Heart left ventricle (tissue), 16 donors: ENCODE measurements at regions of chr1 and their contacts with region 1.

Region 1: GRCh38 chr1:180540697-180541594 is 17.8 kb upstream of the OVAAL start:
- DNase-seq: peak in 3 of 5 donors; percentile 37 to 66 (median 37)
- ATAC-seq: peak; percentile 68 to 70 (median 69)
- H3K4me3 ChIP-seq: no peak overlapping the region
- H3K27ac ChIP-seq: peak overlapping the region; percentile 68 to 89 (median 79)
- H3K4me1 ChIP-seq: peaks cover 3 to 51% (median 34%) of the 10 kb centered on the region in 12 donors
- H3K27me3 ChIP-seq: no peaks in the 10 kb centered on the region
- CTCF ChIP-seq: no peak
- POLR2A ChIP-seq: peak in 1 of 2 donors; percentile 15

Region 2: DNA sequence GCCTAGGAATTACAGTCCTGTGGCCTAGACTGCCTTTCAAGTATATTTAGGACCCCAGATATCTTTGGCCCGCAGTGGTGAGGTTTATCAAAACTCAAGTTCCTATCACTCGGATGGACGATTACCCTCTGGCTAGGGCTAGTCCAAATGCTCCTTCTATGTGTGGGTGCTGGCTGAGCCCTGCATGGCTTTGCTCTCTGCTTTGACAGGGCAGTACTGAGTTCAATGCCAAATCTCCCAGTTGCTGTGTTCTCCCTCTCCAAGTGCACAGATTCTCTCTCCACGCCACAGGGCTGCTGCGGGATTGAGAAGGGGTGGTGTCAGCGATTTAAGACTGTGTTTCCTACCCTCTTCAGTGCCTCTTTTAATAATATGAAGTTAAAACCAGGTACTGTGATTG is 213.9 kb before region 1 on chr1:
- intact Hi-C with region 1: no loop called
- DNase-seq: peak in 2 of 5 donors; percentile 25 to 35
- ATAC-seq: peak; percentile 78 to 95 (median 86)
- H3K4me3 ChIP-seq: no peak overlapping the region
- H3K27ac ChIP-seq: no peak overlapping the region
- H3K4me1 ChIP-seq: peaks cover 0 to 4% (median 0%) of the 10 kb centered on the region in 12 donors
- H3K27me3 ChIP-seq: no peaks in the 10 kb centered on the region
- CTCF ChIP-seq: no peak
- POLR2A ChIP-seq: no peak

Region 3: DNA sequence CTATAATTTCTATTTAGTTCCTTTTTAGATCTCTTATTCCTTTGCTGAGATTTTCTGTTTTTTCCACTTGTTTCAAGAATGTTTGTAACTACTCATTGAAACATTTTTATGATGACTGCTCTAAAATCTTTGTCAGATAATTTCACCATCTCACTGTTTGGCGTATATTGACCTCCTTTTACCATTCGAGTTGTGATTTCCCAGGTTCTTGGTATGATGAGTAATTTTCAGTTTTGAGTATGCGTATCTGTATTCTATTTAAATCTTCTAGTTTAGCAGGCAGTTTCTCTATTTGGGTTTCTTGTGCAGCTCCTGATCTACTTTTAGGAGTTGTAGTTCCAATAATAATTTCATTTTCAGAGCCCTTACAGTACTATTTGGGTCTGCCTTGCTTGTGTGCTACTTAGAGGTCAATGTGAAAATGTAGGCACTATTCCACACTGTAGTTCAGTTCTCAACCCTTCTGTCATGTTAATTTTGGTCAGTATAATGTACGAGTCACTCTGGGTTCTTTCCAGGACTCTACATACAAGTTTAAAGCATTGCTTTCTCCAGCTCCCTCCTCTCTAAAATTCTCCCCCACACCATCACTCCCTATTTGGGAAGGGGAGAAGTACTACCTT is 154.1 kb before region 1 on chr1:
- intact Hi-C with region 1: no loop called
- DNase-seq: no peak
- ATAC-seq: no peak
- H3K4me3 ChIP-seq: no peak overlapping the region
- H3K27ac ChIP-seq: no peak overlapping the region
- H3K4me1 ChIP-seq: no peaks in the 10 kb centered on the region
- H3K27me3 ChIP-seq: no peaks in the 10 kb centered on the region
- CTCF ChIP-seq: no peak
- POLR2A ChIP-seq: no peak

Region 4: GRCh38 chr1:180563026-180563827 is 22.3 kb after region 1 on chr1:
- intact Hi-C with region 1: loop called in 1 of 10 experiments (anchors 2 kb)
- DNase-seq: peak in 2 of 5 donors; percentile 35 to 40
- ATAC-seq: peak; percentile 59 to 81 (median 77)
- H3K4me3 ChIP-seq: no peak overlapping the region
- H3K27ac ChIP-seq: peak overlapping the region; percentile 65 to 92 (median 82)
- H3K4me1 ChIP-seq: peaks cover 5 to 71% (median 39%) of the 10 kb centered on the region in 12 donors
- H3K27me3 ChIP-seq: no peaks in the 10 kb centered on the region
- CTCF ChIP-seq: no peak
- POLR2A ChIP-seq: no peak

Region 5: DNA sequence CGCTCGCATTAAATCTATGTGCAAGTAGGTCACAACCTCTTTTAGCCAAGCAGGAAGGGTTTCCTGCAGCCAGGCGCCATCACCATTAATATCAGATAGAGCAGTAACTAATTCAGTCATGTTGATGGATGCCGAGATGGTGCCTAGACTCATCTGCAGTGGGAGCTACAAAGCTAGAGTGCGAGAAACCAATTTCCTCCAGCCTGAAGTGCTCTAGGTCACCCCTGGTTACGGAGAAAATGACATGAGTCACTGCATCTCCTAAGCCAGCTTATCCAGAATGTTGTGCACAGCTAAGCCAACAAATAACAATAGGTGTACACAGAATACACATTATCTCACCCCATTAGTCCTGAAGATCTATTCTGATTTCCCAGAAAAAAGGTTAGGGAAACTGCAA is 53.8 kb after region 1 on chr1:
- intact Hi-C with region 1: loop called in 1 of 10 experiments (anchors 5 kb)
- DNase-seq: no peak
- ATAC-seq: no peak
- H3K4me3 ChIP-seq: no peak overlapping the region
- H3K27ac ChIP-seq: no peak overlapping the region
- H3K4me1 ChIP-seq: peaks cover 0 to 19% (median 0%) of the 10 kb centered on the region in 12 donors
- H3K27me3 ChIP-seq: no peaks in the 10 kb centered on the region
- CTCF ChIP-seq: no peak
- POLR2A ChIP-seq: no peak